ENCODE measurements at regions of chr12 and their contacts with region 1.

Region 1: DNA sequence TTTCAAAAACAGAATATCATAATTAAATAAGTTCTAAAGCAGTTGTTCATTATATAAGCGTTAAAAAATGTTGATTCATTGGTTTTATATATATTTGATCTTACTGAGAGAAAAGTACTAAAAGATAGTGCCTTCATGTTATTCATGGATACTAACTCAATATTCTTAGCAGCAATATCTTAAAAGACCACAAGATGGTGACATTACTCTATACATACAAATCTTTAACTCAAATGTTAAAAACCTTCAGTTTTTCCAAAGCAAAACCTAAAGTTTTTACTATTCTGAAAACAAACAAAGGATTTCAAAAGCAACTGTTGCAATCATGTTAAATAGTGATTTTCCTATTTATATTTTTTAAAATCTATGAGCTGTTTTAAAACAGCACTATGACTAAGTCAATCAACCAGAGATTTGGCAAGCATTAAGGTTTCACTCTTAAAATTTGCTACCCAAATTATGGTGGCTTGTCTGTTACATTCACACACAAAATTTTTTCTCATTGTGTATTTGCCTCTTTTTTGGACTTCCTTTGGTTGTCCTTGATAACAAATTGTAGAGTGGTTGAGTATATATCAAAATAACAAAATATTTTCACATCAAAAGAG is 50.1 kb upstream of the RERGL start:
- DNase-seq: no peak
- ATAC-seq: peak in 1 of 2 donors; percentile 54
- H3K4me3 ChIP-seq: no peak overlapping the region
- H3K27ac ChIP-seq: no peak overlapping the region
- H3K4me1 ChIP-seq: peaks cover 7% of the 10 kb centered on the region
- H3K27me3 ChIP-seq: no peaks in the 10 kb centered on the region
- CTCF ChIP-seq: peak; percentile 54

Region 2: DNA sequence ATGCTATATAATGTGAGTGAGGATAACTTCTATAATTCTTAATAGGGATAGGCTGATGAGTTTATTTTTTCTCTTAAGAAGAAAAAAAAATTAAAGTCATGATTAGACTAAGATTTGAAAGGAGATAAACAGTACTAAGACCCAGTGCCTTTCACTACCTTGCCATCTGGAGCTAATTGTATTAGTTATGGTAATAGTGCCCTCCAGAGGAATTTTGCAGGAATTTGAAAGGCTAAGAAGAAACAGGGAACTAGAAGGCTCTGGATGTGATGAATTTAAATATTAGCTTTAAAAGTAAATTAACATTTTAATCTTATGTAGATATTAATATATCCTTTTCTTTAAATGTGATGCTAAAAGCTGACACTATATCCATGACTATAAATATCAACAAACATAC is 84.7 kb after region 1 on chr12:
- intact Hi-C with region 1: loop called (anchors 10 kb)
- DNase-seq: no peak
- ATAC-seq: peak in 1 of 2 donors; percentile 54
- H3K4me3 ChIP-seq: no peak overlapping the region
- H3K27ac ChIP-seq: no peak overlapping the region
- H3K4me1 ChIP-seq: no peaks in the 10 kb centered on the region
- H3K27me3 ChIP-seq: no peaks in the 10 kb centered on the region
- CTCF ChIP-seq: peak; percentile 36